Activated CD8-positive, alpha-beta T cell treated with anti-CD3 and anti-CD28 coated beads, Interleukin-2, amount 10 ng/mL, durations not matched to agents 7 days and 5 days (primary cell): ENCODE measurements at regions of chr16 and their contacts with region 1.

Region 1: DNA sequence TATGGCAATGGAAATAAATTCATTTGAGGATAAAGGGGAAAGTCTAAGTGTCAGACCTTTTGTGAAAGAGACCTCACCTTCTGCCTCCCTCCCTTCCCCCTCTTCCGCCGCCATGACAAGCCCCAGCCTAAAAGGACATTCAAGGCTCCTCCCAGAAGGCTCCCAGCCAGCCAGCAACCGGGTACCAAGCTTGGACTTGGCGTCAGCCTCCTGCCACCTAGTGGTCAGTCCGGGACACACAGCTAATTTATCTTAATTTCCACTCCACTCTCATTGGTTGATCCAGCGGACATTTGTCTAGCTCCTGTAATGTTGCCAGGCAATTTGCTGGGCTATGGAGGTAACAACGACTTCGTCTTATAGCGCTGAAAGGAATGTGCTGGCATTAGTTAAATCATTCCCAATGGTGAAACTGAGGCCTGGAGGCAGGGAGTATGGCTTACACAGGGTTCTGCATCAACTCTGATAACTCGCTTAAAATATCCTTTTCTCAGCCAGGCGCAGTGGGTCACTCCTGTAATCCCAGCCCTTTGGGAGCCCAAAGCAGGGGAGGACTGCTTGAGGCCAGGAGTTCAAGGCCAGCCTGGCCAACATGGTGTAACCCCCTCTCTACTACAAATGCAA is 19.3 kb upstream of the CLEC3A start:
- DNase-seq: peak; percentile 81
- ATAC-seq: peak; percentile 96
- H3K4me3 Mint-ChIP-seq: no peak overlapping the region
- H3K27ac Mint-ChIP-seq: no peak overlapping the region
- H3K4me1 Mint-ChIP-seq: no peaks in the 10 kb centered on the region
- H3K27me3 Mint-ChIP-seq: no peaks in the 10 kb centered on the region

Region 2: DNA sequence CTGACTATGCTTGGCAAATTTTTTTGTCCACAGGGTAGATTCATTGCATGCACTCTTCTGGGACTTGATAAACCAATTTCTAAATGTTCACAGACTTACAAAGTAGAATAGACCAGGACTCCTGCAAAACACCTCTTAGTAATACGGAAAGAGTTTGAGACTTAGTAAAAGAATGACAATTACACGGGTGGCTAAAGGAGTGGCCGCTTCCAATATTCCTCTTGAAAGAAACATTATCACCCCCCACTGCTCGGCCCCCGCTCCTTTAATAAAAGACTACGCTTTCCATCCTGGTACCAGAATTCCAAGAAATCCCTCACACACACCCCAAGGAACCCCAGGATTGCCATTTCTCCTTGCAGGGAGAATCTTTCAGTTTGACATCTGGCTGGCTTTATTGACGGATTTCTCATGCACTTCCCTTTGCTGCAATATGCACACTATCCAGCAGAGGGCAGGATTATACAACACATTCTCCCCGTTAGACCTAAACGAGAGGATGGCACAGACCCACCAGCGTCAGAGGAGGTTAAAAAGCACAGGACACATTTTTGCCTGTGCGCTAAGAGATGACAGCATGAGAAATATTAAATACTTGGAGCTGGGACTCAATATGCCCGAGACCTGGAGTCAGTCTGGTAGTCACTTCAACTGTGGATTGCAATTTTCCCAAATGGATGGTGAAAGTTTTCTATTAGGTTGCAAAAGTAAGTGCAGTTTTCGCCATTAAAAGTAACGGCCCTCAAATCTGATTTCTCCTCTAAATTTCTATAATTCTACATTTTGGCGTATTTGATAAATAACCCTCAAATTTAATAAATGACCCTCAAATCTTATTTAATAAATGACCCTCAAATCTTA is 327.3 kb before region 1 on chr16:
- CTCF ChIA-PET with region 1: interaction called, 14 read pairs
- POLR2A ChIA-PET with region 1: no interaction called
- DNase-seq: peak; percentile 72
- ATAC-seq: peak; percentile 58
- H3K4me3 Mint-ChIP-seq: no peak overlapping the region
- H3K27ac Mint-ChIP-seq: no peak overlapping the region
- H3K4me1 Mint-ChIP-seq: no peaks in the 10 kb centered on the region
- H3K27me3 Mint-ChIP-seq: no peaks in the 10 kb centered on the region

Region 3: DNA sequence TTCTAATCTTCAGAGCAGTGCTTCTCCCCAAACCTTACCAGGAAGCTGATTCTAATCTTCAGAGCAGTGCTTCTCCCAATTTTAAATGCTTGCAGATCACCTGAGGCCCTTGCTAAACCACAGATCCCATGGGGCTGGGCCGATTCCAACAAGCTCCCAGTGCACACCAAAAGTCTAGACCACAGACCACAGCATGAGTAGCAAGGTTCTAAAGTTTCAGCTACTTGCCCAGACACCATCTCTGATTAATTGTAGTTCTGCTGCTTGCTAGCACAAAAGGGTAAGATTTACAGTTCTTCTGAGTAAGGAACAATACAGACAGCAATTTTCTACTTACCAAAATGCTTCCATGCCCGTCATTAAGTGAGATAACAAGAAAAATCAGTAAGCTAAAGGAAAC is 31.5 kb after region 1 on chr16:
- CTCF ChIA-PET with region 1: no interaction called
- POLR2A ChIA-PET with region 1: no interaction called
- DNase-seq: no peak
- ATAC-seq: no peak
- H3K4me3 Mint-ChIP-seq: no peak overlapping the region
- H3K27ac Mint-ChIP-seq: no peak overlapping the region
- H3K4me1 Mint-ChIP-seq: peaks cover 6% of the 10 kb centered on the region
- H3K27me3 Mint-ChIP-seq: peaks cover 9% of the 10 kb centered on the region